Activated naive CD4-positive, alpha-beta T cell treated with anti-CD3 and anti-CD28 coated beads, Interleukin-2, amount 10 ng/mL, durations not matched to agents 7 days and 5 days (primary cell): ENCODE measurements at regions of chr13 and their contacts with region 1.

Region 1: DNA sequence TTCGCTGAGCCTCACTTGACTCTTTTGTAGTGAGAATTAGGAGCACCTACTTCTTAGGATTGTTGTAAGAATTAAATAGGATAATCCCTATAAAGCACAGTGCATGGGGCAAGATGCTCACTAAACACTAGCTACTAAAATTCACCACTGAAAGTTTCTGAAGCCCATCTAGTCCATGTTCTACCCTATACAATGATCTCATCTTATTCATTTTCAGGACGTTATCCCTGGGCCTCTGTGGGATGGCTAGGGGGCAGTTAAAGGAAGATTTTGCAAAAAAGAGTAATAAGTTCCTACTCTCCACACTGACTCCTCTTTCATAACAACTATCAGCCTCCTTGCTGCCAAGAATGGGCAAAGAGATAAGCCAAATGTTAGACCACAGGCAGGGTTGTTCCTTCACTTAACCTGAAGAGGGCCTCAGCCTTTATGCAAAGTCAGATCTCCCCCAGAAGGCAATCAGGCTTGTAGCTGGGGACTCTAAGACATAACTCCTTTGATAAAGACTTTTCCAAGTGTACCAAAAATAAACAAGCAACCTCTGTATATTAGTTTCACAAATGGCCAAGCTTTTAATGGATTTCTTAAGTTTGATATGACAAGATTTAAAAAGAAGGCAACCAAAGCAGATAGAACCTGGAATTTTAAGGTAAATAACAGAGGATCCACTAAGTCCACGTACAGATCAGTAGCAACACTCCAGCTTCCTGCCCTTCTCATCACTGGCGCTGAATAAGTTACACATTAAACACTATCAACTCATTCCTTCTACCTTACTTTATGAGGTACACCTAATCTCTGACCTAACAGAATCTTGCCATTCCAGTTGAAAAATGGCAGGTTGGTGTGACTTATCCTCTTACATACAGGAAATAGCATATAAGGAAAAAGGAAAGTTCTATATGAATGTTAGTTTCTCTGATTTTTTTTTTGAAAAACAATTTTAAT is 44.4 kb downstream of the ELF1 start:
- DNase-seq: peak; percentile 55
- H3K4me3 Mint-ChIP-seq: peak overlapping the region; percentile 21
- H3K27ac Mint-ChIP-seq: peak overlapping the region; percentile 67
- H3K4me1 Mint-ChIP-seq: peaks cover 88% of the 10 kb centered on the region
- H3K27me3 Mint-ChIP-seq: no peaks in the 10 kb centered on the region

Region 2: DNA sequence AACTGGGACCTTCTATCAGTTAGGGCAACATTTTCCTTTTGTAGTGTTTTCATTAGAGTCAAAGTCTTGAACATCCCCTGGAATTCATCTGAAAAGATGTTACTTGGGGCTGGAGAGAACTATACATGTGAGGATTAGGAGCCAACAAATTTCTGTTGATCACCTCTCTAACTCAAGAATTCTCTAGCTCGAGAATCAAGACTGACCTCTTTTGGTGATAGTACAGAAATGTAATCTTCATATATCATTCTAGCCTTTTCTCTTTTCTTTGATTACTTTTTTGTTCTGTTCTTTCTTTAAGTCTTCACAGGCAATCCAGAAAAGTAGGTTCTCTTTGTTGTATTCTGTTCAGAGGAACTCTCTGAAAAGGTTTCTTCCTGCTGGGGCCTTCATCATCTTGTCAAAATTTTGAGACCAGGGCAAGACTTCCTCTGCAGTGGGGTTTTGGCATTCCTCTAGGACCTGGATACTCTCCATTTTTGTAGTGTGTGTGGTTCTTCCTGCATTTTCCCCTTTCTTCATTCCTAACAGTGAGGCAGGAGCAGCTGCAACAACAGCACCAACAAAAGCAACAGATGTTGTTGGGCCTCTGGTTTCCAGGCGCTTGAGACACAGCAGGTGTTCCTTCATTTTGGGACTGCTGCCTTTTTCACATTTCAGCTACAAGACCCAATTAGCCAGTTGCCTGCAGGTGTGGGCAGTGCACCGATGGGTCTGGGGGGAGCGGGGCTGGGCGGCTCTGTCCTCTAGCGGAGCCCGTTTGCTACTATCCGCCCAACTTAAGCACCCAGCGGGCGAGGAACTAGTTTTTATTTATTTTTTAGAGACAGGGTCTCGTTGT is 18.2 kb after region 1 on chr13:
- CTCF ChIA-PET with region 1: interaction called, 17 read pairs
- DNase-seq: no peak
- H3K4me3 Mint-ChIP-seq: no peak overlapping the region
- H3K27ac Mint-ChIP-seq: peak overlapping the region; percentile 37
- H3K4me1 Mint-ChIP-seq: peaks cover 80% of the 10 kb centered on the region
- H3K27me3 Mint-ChIP-seq: no peaks in the 10 kb centered on the region

Region 3: GRCh38 chr13:41019011-41019487 is 44.3 kb after region 1 on chr13 and contains the start of gene ELF1:
- CTCF ChIA-PET with region 1: interaction called, 19 read pairs
- DNase-seq: peak; percentile 75
- H3K4me3 Mint-ChIP-seq: peak within 1 kb of the TSS; percentile 96
- H3K27ac Mint-ChIP-seq: peak within 1 kb of the TSS; percentile 99
- H3K4me1 Mint-ChIP-seq: peaks cover 47% of the 10 kb centered on the region
- H3K27me3 Mint-ChIP-seq: no peaks in the 10 kb centered on the region

Region 4: GRCh38 chr13:41054212-41054877 is 79.6 kb after region 1 on chr13:
- CTCF ChIA-PET with region 1: interaction called, 20 read pairs
- DNase-seq: peak; percentile 53
- H3K4me3 Mint-ChIP-seq: no peak overlapping the region
- H3K27ac Mint-ChIP-seq: no peak overlapping the region
- H3K4me1 Mint-ChIP-seq: peaks cover 46% of the 10 kb centered on the region
- H3K27me3 Mint-ChIP-seq: no peaks in the 10 kb centered on the region

Region 5: DNA sequence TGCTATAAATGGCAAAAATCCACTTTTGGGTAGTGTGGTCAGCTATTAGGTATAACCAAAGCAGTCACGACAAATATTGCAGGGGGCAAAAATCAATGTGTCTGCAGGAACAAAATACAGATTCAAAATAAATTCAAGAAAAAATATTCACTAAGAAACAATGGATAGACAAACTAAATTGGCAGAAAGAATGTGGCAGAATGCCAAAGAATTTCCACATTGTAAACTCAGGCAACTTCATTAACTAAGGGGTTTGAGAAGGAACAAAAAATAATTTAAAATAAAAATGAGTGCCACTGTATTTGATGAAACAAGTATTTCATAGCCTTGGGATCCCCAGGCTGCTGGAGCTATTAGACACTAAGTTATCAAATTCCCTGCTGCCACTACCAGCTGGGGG is 793.1 kb after region 1 on chr13:
- CTCF ChIA-PET with region 1: no interaction called
- DNase-seq: no peak
- H3K4me3 Mint-ChIP-seq: no peak overlapping the region
- H3K27ac Mint-ChIP-seq: no peak overlapping the region
- H3K4me1 Mint-ChIP-seq: peaks cover 16% of the 10 kb centered on the region
- H3K27me3 Mint-ChIP-seq: no peaks in the 10 kb centered on the region